Endothelial cell of umbilical vein (primary cell): ENCODE measurements at regions of chr14 and their contacts with region 1.

Region 1: DNA sequence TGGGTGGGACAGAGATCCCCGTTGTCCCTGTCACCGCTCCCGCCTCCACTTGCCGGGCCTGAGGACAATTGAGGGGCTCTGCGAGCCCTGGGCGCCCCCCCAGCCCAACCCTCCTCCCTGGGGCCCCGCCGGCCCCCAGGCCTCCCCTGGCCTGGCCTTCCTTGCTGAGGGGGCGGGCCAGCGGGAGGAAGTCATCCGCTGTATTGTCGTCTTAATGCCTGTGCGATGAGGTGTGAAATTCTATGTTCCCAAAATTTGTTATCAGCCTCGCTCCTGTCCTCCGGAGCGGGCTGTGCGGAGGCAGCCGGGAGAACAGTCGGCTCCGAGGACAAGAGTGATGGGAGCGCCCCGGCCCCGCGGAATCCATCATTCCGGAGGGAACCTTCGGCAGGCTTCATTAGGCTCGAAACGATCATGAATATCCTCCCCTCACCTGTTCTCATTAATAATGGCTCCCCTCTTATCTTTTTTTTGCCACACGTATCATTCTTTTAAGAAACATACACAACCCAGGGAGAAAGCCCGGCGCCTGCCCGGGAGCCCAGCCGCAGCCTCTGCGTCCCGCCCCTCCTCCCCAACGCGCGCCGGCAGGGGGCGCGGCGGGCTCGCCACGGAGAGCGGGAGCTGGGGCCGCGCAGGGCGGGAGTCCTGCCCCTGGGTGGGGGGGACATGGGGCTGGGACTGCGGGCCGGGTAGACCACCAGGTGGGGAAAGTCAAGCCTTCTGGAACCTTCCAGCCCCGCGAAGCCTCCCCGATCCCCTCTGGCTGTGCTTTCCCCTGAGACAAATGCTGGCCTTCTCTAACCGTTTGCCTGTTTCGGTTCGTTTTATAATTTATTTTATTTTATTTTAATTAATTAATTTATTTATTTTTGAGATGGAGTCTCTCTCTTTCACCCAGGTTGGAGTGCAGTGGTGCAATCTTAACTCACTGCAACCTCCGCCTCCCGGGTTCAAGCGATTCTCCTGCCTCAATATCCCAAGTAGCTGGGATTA is 17.1 kb upstream of the DLK1 start:
- DNase-seq: peak; percentile 24
- H3K4me3 ChIP-seq: no peak overlapping the region
- H3K27ac ChIP-seq: no peak overlapping the region
- H3K4me1 ChIP-seq: peaks cover 5% of the 10 kb centered on the region
- H3K27me3 ChIP-seq: no peaks in the 10 kb centered on the region
- CTCF ChIP-seq: peak; percentile 13 to 58
- POLR2A ChIP-seq: no peak

Region 2: DNA sequence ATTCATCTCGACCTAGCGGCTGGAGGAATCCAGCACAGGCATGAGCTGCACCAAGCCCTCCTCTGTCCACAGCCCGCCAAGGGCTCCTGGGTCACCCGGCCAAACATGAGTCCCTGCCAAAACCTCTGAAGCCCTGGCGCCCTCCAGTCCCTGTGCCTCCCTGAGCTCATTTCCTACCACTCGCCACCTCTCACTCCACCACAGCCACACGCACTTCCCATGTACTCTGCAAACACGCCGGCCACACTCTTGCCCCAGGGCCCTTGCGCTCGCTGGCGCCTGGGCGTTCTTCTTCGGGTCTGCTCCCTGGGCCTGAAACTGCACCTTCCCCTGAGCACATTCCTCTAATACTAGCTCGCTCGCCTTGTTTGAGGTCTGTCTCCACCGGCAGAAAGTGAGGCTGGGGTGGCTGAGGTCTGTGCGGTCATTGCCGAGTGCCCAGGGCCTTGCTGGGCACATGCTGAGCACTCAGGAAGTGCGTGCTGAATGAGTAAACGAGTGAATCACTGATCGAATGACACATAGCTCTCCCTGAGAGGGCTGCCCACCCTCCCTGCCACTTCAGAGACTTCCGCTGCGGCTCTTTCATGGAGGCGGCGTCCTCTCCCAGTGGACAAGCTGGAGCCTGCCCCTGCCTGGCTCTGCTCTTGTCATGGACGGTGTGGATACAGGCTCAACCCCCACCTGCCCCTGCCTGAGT is 16.6 kb before region 1 on chr14:
- CTCF ChIA-PET with region 1: interaction called, 25 read pairs
- POLR2A ChIA-PET with region 1: interaction called, 3 read pairs
- dilution Hi-C with region 1: no loop called
- intact Hi-C with region 1: loop called (anchors 1 kb)
- DNase-seq: peak; percentile 87
- H3K4me3 ChIP-seq: no peak overlapping the region
- H3K27ac ChIP-seq: peak overlapping the region; percentile 88
- H3K4me1 ChIP-seq: peaks cover 21% of the 10 kb centered on the region
- H3K27me3 ChIP-seq: no peaks in the 10 kb centered on the region
- CTCF ChIP-seq: no peak
- POLR2A ChIP-seq: peak; percentile 68

Region 3: GRCh38 chr14:100698666-100699448 is 10.7 kb before region 1 on chr14:
- CTCF ChIA-PET with region 1: interaction called, 27 read pairs
- POLR2A ChIA-PET with region 1: no interaction called
- dilution Hi-C with region 1: no loop called
- intact Hi-C with region 1: no loop called
- DNase-seq: no peak
- H3K4me3 ChIP-seq: no peak overlapping the region
- H3K27ac ChIP-seq: no peak overlapping the region
- H3K4me1 ChIP-seq: no peaks in the 10 kb centered on the region
- H3K27me3 ChIP-seq: peaks cover 0 to 3% of the 10 kb centered on the region in 2 experiments
- CTCF ChIP-seq: no peak
- POLR2A ChIP-seq: no peak

Region 4: GRCh38 chr14:100723135-100723829 is 13.7 kb after region 1 on chr14:
- CTCF ChIA-PET with region 1: interaction called, 24 read pairs
- POLR2A ChIA-PET with region 1: no interaction called
- dilution Hi-C with region 1: no loop called
- intact Hi-C with region 1: no loop called
- DNase-seq: no peak
- H3K4me3 ChIP-seq: no peak overlapping the region
- H3K27ac ChIP-seq: no peak overlapping the region
- H3K4me1 ChIP-seq: no peaks in the 10 kb centered on the region
- H3K27me3 ChIP-seq: peaks cover 36 to 53% of the 10 kb centered on the region in 2 experiments
- CTCF ChIP-seq: no peak
- POLR2A ChIP-seq: no peak

Region 5: DNA sequence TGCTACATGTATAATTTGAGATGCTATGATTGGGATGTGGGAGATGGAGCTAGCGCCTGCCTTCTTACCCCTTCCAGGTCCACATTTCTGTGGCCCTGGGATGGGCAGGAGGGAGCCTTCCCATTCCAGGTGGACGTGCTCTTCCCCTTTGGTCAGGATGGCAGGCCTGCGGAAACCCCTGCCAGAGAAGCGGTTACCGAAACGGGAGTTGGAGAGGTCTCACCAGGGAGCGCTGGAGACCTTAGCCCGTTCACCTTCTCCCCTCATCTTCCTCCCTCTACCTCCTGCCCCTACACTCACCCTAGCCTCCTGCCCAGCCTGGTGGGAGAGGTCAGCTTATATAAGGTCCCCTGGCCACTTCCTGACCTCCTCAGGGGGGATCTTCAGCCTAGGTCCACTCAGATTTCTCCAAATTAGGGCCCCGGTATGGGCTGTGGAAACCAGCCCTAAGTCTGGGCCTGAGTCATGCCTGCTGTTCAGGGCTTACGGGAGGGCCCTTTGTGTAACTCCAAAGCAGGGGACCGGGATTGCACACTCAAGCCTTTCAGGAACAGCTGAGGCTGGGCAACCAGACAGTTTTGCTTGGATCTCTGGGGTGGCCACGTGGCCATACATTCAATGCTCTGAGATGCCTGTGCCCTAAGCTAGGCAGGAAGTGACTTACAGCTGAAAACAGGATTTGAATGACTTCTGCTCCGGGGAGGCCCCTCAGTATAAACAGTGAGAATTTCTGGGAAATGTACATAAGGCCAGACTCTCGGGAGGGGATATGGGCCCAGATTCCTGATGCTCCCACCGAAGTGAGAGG is 106.1 kb after region 1 on chr14:
- CTCF ChIA-PET with region 1: interaction called, 3 read pairs
- POLR2A ChIA-PET with region 1: no interaction called
- dilution Hi-C with region 1: no loop called
- intact Hi-C with region 1: loop called (anchors 5 kb)
- DNase-seq: peak; percentile 83
- H3K4me3 ChIP-seq: no peak overlapping the region
- H3K27ac ChIP-seq: peak overlapping the region; percentile 13
- H3K4me1 ChIP-seq: peaks cover 9% of the 10 kb centered on the region
- H3K27me3 ChIP-seq: no peaks in the 10 kb centered on the region
- CTCF ChIP-seq: no peak
- POLR2A ChIP-seq: no peak

Region 6: DNA sequence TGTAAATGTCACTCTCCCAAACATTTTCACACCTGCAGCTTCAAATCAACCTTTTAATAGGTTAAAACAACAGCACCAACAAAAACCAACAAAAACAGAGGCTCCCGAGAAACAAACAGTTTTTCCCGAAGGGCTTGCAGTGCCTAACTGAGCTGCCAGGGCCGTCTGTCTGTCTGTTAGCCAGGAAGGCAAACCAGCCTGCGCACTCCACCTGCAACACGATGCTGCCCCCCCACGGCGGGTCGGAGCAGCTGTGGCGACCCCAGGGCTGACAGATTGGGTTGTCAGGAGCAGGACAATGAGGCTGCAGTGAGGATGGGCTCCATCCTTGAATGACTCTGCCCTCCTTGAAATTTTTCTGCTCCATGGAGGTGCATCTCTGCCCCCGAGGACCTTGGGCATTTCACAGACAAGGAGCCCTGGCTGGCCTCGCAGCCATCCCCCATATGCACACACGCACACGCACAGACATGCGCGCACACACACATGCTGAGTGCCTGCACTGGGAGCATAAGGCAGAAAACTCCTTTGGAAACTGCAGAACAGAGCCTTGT is 191.3 kb after region 1 on chr14:
- CTCF ChIA-PET with region 1: interaction called, 13 read pairs
- POLR2A ChIA-PET with region 1: no interaction called
- dilution Hi-C with region 1: no loop called
- intact Hi-C with region 1: loop called (anchors 5 kb)
- DNase-seq: peak; percentile 8
- H3K4me3 ChIP-seq: no peak overlapping the region
- H3K27ac ChIP-seq: no peak overlapping the region
- H3K4me1 ChIP-seq: peaks cover 13% of the 10 kb centered on the region
- H3K27me3 ChIP-seq: peaks cover 3 to 6% of the 10 kb centered on the region in 2 experiments
- CTCF ChIP-seq: peak; percentile 8 to 42
- POLR2A ChIP-seq: no peak